Activated naive CD4-positive, alpha-beta T cell treated with anti-CD3 and anti-CD28 coated beads for 36 hours (primary cell): ENCODE measurements at regions of chr13 and their contacts with region 1.

Region 1: DNA sequence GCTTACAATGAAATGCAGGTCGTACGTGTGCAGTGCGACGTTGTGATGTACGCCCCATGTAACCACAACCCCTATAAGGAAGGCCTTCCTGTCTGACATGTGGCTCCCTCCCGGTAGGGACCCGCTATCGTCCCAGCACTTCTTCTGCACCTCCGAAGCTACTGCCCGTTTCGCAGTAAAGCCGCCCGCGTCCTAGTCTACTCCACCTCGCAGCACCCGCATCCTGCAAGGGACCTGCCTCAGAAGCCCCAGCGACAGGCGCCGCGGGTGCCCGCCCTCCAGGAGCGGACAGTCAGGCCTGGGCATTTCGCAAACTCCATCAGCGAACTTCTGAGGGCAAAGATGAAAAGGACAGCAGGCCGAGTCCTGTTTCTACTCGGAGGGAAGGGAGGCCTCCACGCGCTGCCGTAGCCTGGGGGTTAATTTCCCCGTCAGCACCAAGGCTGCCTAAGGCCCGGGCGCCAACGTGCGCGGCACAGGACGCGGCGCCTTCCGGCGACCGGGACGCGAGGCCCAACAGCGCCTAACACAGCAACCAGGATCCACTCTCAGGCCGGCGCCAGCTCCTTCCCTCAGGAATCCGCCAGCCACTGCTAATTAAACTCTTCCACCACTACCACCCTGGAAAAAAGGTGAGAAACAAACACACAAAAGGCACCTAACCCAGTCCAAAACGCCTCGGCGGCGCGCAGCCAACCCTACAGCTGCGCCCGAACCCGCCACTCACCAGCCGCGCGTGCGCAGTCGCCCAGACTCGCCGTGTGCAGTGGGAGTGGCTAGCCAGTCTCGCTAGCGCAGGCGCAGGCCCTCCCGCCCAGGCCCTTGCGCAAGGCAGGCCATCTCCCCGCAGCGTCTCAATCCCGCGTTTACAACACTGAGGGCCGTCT is at the start of gene EEF1AKMT1:
- DNase-seq: peak; percentile 96
- H3K4me3 Mint-ChIP-seq: peak within 1 kb of the TSS; percentile 88
- H3K27ac Mint-ChIP-seq: peak within 1 kb of the TSS; percentile 98
- H3K4me1 Mint-ChIP-seq: peaks cover 40% of the 10 kb centered on the region
- H3K27me3 Mint-ChIP-seq: no peaks in the 10 kb centered on the region
- total RNA-seq, gene EEF1AKMT1: 15.1 to 16.5 TPM

Region 2: DNA sequence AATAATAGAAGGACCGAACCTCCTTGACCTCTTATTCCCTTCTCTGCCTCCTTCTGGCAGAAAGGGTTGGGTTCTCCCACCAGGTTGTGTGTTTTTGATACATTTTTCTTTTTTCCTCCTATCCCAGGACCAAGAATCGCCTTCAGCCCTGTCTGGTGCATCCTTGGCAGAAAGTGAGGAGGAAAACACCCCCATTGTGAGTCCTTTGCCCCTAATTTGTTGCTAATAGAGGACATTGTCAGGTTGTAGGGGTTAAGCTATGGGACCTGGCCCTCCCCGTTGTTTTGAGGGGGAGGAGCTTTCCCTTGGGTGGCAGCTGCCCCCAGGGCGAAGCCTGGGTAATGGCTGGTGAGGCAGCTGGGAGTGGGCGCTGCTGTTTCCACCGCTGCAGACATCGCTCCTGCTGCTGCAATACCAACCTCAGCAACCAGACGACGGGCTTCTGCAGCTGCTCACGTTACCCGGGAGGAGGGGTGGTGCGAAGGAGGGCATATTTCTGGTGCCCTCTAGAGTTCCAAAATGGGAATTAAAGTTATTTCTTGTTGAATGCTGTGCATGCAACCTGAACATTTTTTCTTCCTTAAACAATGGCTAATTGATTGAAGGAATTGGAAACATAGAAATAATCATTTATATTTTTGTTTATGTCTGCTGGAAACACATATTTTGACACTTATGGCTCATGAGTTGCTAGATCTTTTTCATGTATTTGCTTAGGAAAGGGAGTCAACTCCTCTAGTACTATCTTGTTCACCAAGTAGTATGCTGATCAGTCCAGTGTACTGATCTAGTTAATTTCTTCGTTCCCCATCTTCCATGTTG is 813.4 kb before region 1 on chr13:
- CTCF ChIA-PET with region 1: no interaction called
- intact Hi-C with region 1: loop called (anchors 5 kb)
- DNase-seq: peak; percentile 92
- H3K4me3 Mint-ChIP-seq: peak overlapping the region; percentile 95
- H3K27ac Mint-ChIP-seq: peak overlapping the region; percentile 96
- H3K4me1 Mint-ChIP-seq: peaks cover 30% of the 10 kb centered on the region
- H3K27me3 Mint-ChIP-seq: no peaks in the 10 kb centered on the region

Region 3: GRCh38 chr13:20495082-20496023 is 278.1 kb before region 1 on chr13:
- CTCF ChIA-PET with region 1: no interaction called
- intact Hi-C with region 1: loop called (anchors 5 kb)
- DNase-seq: peak; percentile 81
- H3K4me3 Mint-ChIP-seq: no peak overlapping the region
- H3K27ac Mint-ChIP-seq: no peak overlapping the region
- H3K4me1 Mint-ChIP-seq: no peaks in the 10 kb centered on the region
- H3K27me3 Mint-ChIP-seq: no peaks in the 10 kb centered on the region

Region 4: GRCh38 chr13:20566898-20567874 is 206.3 kb before region 1 on chr13 and contains the start of gene IFT88:
- CTCF ChIA-PET with region 1: no interaction called
- intact Hi-C with region 1: loop called (anchors 5 kb)
- DNase-seq: peak; percentile 86
- H3K4me3 Mint-ChIP-seq: peak within 1 kb of the TSS; percentile 84
- H3K27ac Mint-ChIP-seq: peak within 1 kb of the TSS; percentile 87
- H3K4me1 Mint-ChIP-seq: peaks cover 23% of the 10 kb centered on the region
- H3K27me3 Mint-ChIP-seq: no peaks in the 10 kb centered on the region
- total RNA-seq, gene IFT88: 2.7 TPM

Region 5: DNA sequence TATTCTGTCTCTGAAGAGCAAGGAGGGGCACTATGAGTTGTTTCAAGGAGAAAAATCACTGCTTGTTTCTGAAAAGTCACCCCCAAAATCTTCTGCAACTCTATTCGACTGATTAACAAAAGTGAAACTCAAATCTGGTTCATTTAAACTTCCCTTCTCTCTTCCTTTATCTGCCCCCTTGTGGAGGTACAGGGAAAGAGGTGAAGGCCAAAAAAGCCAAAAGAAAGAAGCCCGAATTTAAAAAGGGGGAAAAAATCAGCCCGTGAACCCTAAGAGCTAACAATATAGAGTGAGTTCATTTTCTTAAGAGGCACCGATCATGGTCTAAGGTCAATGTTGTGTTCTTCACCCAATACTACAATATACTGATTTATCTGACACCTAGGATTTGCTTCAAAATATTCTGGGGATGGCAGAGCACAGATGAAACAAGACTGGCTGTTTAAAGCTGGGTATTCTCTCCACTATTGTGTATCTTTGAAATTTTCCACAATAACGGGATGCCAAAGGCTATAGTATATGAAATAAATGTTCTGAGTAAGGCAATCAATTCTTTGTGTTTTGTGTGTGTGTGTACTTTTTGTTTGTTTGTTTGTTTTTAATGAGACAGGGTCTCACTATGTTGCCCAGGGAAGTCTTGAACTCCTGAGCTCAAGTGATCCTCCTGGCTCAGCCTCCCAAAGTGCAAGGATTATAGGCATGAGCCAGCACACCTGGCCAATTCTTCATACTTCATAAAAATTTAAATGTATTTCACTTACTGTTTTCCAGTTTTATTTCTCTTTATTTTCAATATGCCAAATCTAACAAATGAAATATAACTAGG is 55.3 kb after region 1 on chr13:
- CTCF ChIA-PET with region 1: interaction called, 3 read pairs
- intact Hi-C with region 1: loop called (anchors 2 kb)
- DNase-seq: peak; percentile 47
- H3K4me3 Mint-ChIP-seq: no peak overlapping the region
- H3K27ac Mint-ChIP-seq: no peak overlapping the region
- H3K4me1 Mint-ChIP-seq: peaks cover 6% of the 10 kb centered on the region
- H3K27me3 Mint-ChIP-seq: no peaks in the 10 kb centered on the region

Region 6: GRCh38 chr13:20882206-20882605 is 108.8 kb after region 1 on chr13:
- CTCF ChIA-PET with region 1: no interaction called
- intact Hi-C with region 1: no loop called
- DNase-seq: no peak
- H3K4me3 Mint-ChIP-seq: no peak overlapping the region
- H3K27ac Mint-ChIP-seq: no peak overlapping the region
- H3K4me1 Mint-ChIP-seq: peaks cover 39% of the 10 kb centered on the region
- H3K27me3 Mint-ChIP-seq: no peaks in the 10 kb centered on the region

Region 7: GRCh38 chr13:21075011-21075898 is 301.8 kb after region 1 on chr13:
- CTCF ChIA-PET with region 1: no interaction called
- intact Hi-C with region 1: loop called (anchors 10 kb)
- DNase-seq: peak; percentile 68
- H3K4me3 Mint-ChIP-seq: peak overlapping the region; percentile 66
- H3K27ac Mint-ChIP-seq: no peak overlapping the region
- H3K4me1 Mint-ChIP-seq: peaks cover 11% of the 10 kb centered on the region
- H3K27me3 Mint-ChIP-seq: peaks cover 8% of the 10 kb centered on the region

Region 8: DNA sequence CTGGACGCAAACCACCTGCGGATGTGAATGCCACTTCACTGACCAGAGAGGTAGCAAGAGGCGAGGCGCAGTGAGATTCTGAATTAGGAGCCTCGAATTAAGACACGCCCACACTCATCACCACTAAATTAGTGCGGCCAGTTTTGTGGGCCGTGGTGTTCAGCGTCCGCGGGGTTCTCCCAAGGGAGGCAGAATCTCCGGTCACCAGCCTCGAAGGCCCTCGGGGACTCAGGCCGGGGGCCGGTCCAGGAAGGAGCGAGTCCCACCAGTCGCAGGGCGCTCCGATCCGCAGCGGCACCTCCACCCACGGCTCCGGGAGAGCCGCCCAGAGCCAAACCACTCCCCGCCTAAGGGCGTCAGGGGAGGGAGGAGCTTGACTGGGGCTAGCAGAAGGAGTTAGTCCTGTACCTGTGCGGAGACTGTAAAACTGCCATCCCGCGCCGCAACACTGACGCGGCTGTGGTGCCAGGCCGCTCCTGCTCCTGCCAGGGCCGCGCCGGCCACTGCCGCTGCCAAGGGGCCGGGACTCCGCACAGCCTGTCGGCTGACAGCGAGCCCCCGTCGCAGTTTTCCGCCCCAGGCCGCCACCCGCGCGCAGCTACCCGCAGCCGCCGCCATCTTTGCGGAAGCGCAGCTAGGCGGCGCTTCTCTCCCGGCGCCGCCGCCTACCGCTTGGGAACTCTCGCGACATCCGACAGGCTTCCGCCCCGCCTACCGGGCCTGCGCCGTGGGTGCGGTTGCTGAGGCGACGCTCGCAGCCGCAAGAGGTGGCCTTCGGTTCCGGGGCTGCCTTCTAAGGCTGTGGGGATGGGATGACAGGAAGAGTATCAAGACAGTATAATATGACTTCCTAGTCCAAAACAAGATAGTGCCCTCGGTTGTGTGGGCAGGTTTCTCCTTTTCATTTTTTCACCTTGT is 830.4 kb after region 1 on chr13 and contains the start of gene MICU2:
- CTCF ChIA-PET with region 1: no interaction called
- intact Hi-C with region 1: loop called (anchors 1 kb)
- DNase-seq: peak; percentile 97
- H3K4me3 Mint-ChIP-seq: peak within 1 kb of the TSS; percentile 84
- H3K27ac Mint-ChIP-seq: peak within 1 kb of the TSS; percentile 90
- H3K4me1 Mint-ChIP-seq: peaks cover 28% of the 10 kb centered on the region
- H3K27me3 Mint-ChIP-seq: peaks cover 3% of the 10 kb centered on the region
- total RNA-seq, gene MICU2: 27.5 to 28.2 TPM